ENCODE measurements at regions of chr11 and their contacts with region 1.

Region 1: GRCh38 chr11:615504-616319 is at the start of gene IRF7:
- DNase-seq: peak; percentile 96
- ATAC-seq: peak; percentile 86 to 96 (median 93)
- H3K4me3 ChIP-seq: peak within 1 kb of the TSS; percentile 33 to 86 (median 73)
- H3K27ac ChIP-seq: peak within 1 kb of the TSS; percentile 74 to 99 (median 96)
- H3K4me1 ChIP-seq: peaks cover 13 to 40% (median 24%) of the 10 kb centered on the region in 9 donors
- H3K27me3 ChIP-seq: no peaks in the 10 kb centered on the region
- CTCF ChIP-seq: no peak
- total RNA-seq, gene IRF7: 4.5 to 20.2 (median 9.9) TPM

Region 2: GRCh38 chr11:575996-576768 is 39.5 kb before region 1 on chr11 and contains the start of gene PHRF1:
- intact Hi-C with region 1: loop called in 3 of 10 experiments (anchors 2 to 5 kb)
- DNase-seq: peak; percentile 95 to 96
- ATAC-seq: peak; percentile 92 to 98 (median 96)
- H3K4me3 ChIP-seq: peak within 1 kb of the TSS; percentile 67 to 99 (median 88)
- H3K27ac ChIP-seq: peak within 1 kb of the TSS; percentile 84 to 99 (median 94)
- H3K4me1 ChIP-seq: peaks cover 26 to 57% (median 54%) of the 10 kb centered on the region in 9 donors
- H3K27me3 ChIP-seq: peaks cover 0 to 21% (median 0%) of the 10 kb centered on the region in 7 donors
- CTCF ChIP-seq: no peak
- total RNA-seq, gene PHRF1: 14.7 to 23.0 (median 18.5) TPM

Region 3: GRCh38 chr11:655036-655726 is 39.5 kb after region 1 on chr11:
- intact Hi-C with region 1: no loop called
- DNase-seq: no peak
- ATAC-seq: no peak
- H3K4me3 ChIP-seq: no peak overlapping the region
- H3K27ac ChIP-seq: no peak overlapping the region
- H3K4me1 ChIP-seq: no peaks in the 10 kb centered on the region
- H3K27me3 ChIP-seq: no peaks in the 10 kb centered on the region
- CTCF ChIP-seq: no peak

Measured in heart right ventricle (tissue), 16 donors.